ENCODE measurements at regions of chr5 and their contacts with region 1.

Region 1: DNA sequence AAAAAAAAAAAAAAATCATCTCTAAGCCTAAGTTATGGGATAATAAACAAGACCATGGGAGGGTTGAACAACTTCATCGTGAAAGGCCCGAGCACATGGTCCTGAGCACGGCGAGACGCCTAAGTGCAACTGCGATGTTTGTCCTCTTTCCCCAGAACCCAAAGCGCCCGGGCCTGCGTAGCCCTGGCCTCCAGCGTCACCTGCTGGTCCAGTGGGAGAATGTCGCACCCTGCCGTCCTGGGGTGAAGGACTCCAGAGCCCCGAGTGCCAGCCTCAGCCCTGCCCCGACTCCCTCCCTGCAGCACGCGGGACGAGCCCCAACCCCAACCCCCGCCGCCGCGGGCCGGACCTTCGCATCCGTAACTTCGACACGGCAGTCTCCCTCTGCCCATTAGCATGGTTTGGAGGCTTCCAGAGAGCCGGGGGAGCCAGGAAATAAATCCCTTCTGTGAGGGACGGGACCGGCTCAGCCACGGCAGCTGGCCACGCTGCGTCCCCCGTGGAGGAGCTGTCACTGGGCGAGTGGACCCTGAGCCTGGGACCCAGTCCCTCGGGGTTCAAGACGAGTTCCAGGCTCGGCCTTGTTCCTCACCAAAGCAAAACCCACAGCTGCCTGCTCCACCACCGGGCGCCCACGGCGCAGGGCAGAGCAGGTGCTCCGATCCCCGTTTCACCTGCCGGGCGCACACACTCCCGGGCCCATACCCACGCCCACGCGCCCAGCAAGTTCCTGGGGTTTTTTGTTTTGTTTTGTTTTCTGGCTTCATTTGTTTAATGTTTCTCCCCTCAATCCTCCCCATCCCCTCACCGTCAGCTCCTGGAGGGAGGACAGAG is 132.5 kb upstream of the HAND1 start:
- DNase-seq: peak; percentile 90
- H3K4me3 Mint-ChIP-seq: peak overlapping the region; percentile 54
- H3K27ac Mint-ChIP-seq: no peak overlapping the region
- H3K4me1 Mint-ChIP-seq: peaks cover 10% of the 10 kb centered on the region
- H3K27me3 Mint-ChIP-seq: peaks cover 39% of the 10 kb centered on the region
- CTCF ChIP-seq: peak; percentile 100

Region 2: DNA sequence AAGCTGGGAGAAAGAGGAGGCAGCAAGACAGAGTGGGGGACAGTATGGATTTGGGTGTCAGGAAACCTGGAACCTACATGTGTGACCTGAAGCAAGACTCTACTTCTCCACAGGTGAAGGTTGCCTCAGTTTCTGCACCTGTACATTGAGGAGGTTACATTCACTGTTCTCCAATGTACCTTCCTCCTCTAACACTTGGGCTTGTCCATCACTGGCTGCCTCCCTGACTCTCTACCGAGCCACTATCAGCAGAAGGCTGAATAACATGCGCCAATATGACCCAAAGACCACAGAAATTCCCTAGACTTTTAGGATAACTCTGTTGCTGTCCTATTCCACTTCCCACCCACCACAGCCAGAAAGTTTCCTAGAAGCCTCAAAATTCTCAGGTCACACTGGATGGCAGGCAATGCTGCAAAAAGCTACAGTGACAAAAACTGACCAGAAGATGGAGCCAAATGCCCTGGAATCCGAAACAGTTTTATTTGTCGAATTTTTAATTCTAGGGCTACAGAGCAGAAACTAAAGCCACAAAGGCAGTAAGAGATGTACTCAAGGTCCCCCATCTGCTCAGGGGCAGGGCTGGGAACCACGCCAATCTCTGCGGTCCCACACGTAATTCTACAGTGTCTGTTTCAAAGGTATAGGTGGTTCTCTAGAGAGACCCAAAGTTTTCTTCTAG is 636.3 kb before region 1 on chr5:
- CTCF ChIA-PET with region 1: interaction called, 8 read pairs
- POLR2A ChIA-PET with region 1: no interaction called
- intact Hi-C with region 1: loop called (anchors 1 kb)
- DNase-seq: peak; percentile 68
- H3K4me3 Mint-ChIP-seq: no peak overlapping the region
- H3K27ac Mint-ChIP-seq: no peak overlapping the region
- H3K4me1 Mint-ChIP-seq: no peaks in the 10 kb centered on the region
- H3K27me3 Mint-ChIP-seq: peaks cover 21% of the 10 kb centered on the region
- CTCF ChIP-seq: peak; percentile 94

Region 3: GRCh38 chr5:154287136-154287535 is 323.4 kb before region 1 on chr5:
- CTCF ChIA-PET with region 1: no interaction called
- POLR2A ChIA-PET with region 1: no interaction called
- intact Hi-C with region 1: no loop called
- DNase-seq: peak; percentile 87
- H3K4me3 Mint-ChIP-seq: no peak overlapping the region
- H3K27ac Mint-ChIP-seq: peak overlapping the region; percentile 23
- H3K4me1 Mint-ChIP-seq: peaks cover 34% of the 10 kb centered on the region
- H3K27me3 Mint-ChIP-seq: no peaks in the 10 kb centered on the region
- CTCF ChIP-seq: no peak

Region 4: DNA sequence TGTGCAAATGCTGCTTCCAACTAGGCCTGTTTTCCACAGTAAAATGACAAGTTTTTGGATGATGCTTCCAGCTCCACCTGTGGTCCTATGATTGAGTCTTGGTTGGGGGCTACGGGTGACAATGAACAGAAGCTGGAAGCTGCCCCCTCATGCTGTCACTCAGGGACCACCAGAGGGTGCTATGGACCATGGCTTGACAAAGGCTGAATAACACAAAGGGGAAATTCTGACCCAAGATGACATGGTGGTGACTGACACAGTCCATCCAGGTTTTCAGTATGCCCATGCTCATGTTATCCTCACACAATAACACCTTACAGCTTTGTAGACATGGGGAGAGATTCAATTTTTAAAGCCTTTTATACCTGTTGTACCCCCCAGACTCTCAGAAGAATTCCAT is 188.7 kb before region 1 on chr5:
- CTCF ChIA-PET with region 1: interaction called, 9 read pairs
- POLR2A ChIA-PET with region 1: no interaction called
- intact Hi-C with region 1: loop called (anchors 1 kb)
- DNase-seq: peak; percentile 45
- H3K4me3 Mint-ChIP-seq: no peak overlapping the region
- H3K27ac Mint-ChIP-seq: no peak overlapping the region
- H3K4me1 Mint-ChIP-seq: no peaks in the 10 kb centered on the region
- H3K27me3 Mint-ChIP-seq: no peaks in the 10 kb centered on the region
- CTCF ChIP-seq: peak; percentile 24

Region 5: GRCh38 chr5:154493274-154493673 is 117.3 kb before region 1 on chr5:
- CTCF ChIA-PET with region 1: no interaction called
- POLR2A ChIA-PET with region 1: no interaction called
- intact Hi-C with region 1: no loop called
- DNase-seq: no peak
- H3K4me3 Mint-ChIP-seq: no peak overlapping the region
- H3K27ac Mint-ChIP-seq: no peak overlapping the region
- H3K4me1 Mint-ChIP-seq: no peaks in the 10 kb centered on the region
- H3K27me3 Mint-ChIP-seq: peaks cover 58% of the 10 kb centered on the region
- CTCF ChIP-seq: no peak

Region 6: GRCh38 chr5:154627698-154628678 is 17.4 kb after region 1 on chr5:
- CTCF ChIA-PET with region 1: interaction called, 11 read pairs
- POLR2A ChIA-PET with region 1: interaction called, 3 read pairs
- intact Hi-C with region 1: no loop called
- DNase-seq: peak; percentile 62
- H3K4me3 Mint-ChIP-seq: no peak overlapping the region
- H3K27ac Mint-ChIP-seq: no peak overlapping the region
- H3K4me1 Mint-ChIP-seq: no peaks in the 10 kb centered on the region
- H3K27me3 Mint-ChIP-seq: no peaks in the 10 kb centered on the region
- CTCF ChIP-seq: no peak

Region 7: GRCh38 chr5:155049569-155050383 is 439.2 kb after region 1 on chr5:
- CTCF ChIA-PET with region 1: no interaction called
- POLR2A ChIA-PET with region 1: no interaction called
- intact Hi-C with region 1: no loop called
- DNase-seq: peak; percentile 43
- H3K4me3 Mint-ChIP-seq: no peak overlapping the region
- H3K27ac Mint-ChIP-seq: no peak overlapping the region
- H3K4me1 Mint-ChIP-seq: no peaks in the 10 kb centered on the region
- H3K27me3 Mint-ChIP-seq: no peaks in the 10 kb centered on the region
- CTCF ChIP-seq: peak; percentile 25